Transverse colon (tissue), 4 donors: ENCODE measurements at regions of chr19 and their contacts with region 1.

Region 1: DNA sequence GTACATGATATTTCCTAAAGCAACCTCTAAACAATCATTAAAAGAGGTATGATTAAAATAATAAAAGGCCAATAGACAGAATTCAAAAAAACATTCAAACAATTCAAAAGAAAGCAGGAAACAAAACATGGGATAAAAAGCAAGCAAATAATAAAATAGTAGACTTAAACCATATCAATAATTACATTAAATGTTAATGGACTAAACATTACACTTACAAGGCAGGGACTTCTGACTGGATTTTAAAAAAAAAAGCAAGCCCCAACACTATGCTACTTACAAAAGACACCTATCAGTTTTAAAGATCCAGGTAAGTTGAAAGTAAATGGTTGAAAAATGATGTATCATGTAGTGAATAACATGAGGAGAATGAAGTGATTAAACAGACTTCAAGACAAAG is 65.2 kb downstream of the KLF2 start:
- DNase-seq: no peak
- H3K4me3 ChIP-seq: no peak overlapping the region
- H3K27ac ChIP-seq: no peak overlapping the region
- H3K4me1 ChIP-seq: no peaks in the 10 kb centered on the region
- H3K27me3 ChIP-seq: no peaks in the 10 kb centered on the region
- CTCF ChIP-seq: no peak
- EP300 ChIP-seq: no peak
- POLR2A ChIP-seq: no peak

Region 2: GRCh38 chr19:16257509-16258002 is 132.3 kb before region 1 on chr19:
- in situ Hi-C with region 1: no loop called
- intact Hi-C with region 1: no loop called
- DNase-seq: no peak
- H3K4me3 ChIP-seq: no peak overlapping the region
- H3K27ac ChIP-seq: peak overlapping the region; percentile 42 to 70 (median 55)
- H3K4me1 ChIP-seq: peaks cover 3 to 25% (median 10%) of the 10 kb centered on the region in 4 donors
- H3K27me3 ChIP-seq: no peaks in the 10 kb centered on the region
- CTCF ChIP-seq: no peak
- EP300 ChIP-seq: no peak
- POLR2A ChIP-seq: no peak

Region 3: GRCh38 chr19:16417660-16418596 is 28.1 kb after region 1 on chr19:
- in situ Hi-C with region 1: no loop called
- intact Hi-C with region 1: loop called (anchors 2 kb)
- DNase-seq: peak; percentile 55
- H3K4me3 ChIP-seq: no peak overlapping the region
- H3K27ac ChIP-seq: no peak overlapping the region
- H3K4me1 ChIP-seq: no peaks in the 10 kb centered on the region
- H3K27me3 ChIP-seq: no peaks in the 10 kb centered on the region
- CTCF ChIP-seq: peak; percentile 80 to 84 (median 81)
- EP300 ChIP-seq: no peak
- POLR2A ChIP-seq: no peak